ENCODE measurements at regions of chr19 and their contacts with region 1.

Region 1: DNA sequence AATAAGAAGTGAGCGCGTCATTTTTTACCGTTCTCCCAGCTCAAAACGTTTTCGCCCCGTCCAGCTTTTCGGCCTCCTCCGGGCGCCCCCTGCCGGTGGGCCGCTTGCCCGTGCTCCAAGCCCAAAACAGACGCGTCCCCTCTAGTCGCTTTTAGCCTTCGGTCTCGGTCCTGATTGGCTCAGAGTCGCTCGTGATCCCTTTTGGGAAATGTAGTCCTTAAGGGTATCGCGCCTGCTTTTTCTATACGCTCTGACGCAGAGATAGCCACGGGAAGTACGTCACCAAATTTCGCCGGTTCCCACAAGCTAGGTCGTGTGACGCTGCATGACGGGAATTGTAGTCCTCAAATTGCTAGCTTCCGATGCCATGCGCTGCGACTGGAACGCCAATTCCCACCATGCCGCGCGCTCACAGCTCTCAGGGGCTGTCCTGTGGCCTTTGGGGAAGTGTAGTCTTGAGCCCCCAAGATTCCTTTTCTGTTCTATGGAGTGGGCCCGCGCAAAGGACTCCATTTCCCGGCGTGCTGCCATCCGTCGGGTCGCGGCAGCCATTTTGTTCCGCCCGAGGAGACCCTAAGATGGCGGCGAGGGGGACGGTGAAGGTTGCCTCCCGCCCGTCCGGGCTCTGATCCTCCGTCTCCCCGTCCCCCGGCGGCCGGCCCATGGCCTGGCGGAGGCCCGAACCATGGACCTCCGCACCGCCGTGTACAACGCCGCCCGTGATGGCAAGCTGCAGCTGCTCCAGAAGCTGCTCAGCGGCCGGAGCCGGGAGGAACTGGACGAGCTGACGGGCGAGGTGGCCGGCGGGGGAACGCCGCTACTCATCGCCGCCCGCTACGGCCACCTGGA is at the start of gene FEM1A:
- DNase-seq: peak; percentile 93
- H3K4me3 ChIP-seq: peak within 1 kb of the TSS; percentile 77 to 87
- H3K27ac ChIP-seq: peak within 1 kb of the TSS; percentile 68 to 82
- H3K4me1 ChIP-seq: peaks cover 7 to 8% of the 10 kb centered on the region in 2 experiments; a peak in 2 of 4 replicates
- H3K27me3 ChIP-seq: no peaks in the 10 kb centered on the region
- CTCF ChIP-seq: peak; percentile 99
- EP300 ChIP-seq: no peak
- RAD21 ChIP-seq: peak; percentile 97
- polyA plus RNA-seq, gene FEM1A: 4.8 and 5.0 TPM in 2 replicates

Region 2: DNA sequence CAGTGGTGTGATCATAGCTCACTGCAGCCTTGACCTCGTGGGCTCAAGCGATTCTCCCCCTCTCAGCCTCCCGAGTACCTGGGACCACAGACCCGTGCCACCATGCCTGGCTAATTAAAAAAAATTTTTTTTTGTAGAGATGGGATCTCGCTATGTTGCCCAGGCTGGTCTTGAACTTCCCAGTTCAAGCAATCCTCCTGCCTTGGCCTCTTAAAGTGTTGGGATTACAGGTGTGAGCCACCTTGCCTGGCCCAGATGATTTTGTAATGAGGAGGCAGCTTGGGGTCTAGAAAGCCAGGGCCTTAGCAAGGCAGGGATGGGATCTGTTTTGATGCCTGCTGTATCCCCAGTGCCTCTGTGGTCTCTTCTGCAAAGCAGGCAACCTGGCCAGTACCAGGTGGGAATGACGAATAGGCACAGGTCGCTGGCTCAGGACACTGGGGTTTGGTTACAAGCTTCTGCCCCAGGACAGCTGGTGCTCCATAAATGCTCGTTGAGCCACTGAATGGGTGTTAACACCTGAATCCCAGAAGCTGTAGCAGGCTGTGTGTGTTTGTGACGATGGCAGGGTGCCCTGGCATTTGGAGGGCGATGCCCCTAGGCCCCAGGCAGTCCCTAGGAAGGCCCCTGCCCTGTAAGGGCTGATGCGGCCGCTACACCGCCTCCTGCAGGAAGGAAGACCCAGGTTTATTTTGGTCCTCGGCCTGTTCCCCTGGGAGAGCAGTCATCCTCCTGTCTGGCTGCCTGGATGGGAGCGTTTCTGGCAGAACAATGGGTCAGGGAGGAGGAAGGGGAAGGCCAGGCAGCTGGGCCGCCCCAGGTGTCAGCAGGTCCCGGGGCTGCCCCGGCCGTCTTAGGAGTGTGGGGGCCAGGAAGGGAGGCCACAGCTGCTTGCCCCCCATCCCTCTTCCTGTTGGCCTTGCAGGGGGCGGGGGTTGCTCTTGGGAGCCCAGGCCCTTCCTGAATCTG is 143.4 kb before region 1 on chr19:
- CTCF ChIA-PET with region 1: no interaction called
- POLR2A ChIA-PET with region 1: no interaction called
- DNase-seq: no peak
- H3K4me3 ChIP-seq: no peak overlapping the region; a peak in 1 of 4 replicates
- H3K27ac ChIP-seq: no peak overlapping the region
- H3K4me1 ChIP-seq: no peaks in the 10 kb centered on the region
- H3K27me3 ChIP-seq: no peaks in the 10 kb centered on the region
- CTCF ChIP-seq: no peak
- EP300 ChIP-seq: no peak
- RAD21 ChIP-seq: no peak

Region 3: DNA sequence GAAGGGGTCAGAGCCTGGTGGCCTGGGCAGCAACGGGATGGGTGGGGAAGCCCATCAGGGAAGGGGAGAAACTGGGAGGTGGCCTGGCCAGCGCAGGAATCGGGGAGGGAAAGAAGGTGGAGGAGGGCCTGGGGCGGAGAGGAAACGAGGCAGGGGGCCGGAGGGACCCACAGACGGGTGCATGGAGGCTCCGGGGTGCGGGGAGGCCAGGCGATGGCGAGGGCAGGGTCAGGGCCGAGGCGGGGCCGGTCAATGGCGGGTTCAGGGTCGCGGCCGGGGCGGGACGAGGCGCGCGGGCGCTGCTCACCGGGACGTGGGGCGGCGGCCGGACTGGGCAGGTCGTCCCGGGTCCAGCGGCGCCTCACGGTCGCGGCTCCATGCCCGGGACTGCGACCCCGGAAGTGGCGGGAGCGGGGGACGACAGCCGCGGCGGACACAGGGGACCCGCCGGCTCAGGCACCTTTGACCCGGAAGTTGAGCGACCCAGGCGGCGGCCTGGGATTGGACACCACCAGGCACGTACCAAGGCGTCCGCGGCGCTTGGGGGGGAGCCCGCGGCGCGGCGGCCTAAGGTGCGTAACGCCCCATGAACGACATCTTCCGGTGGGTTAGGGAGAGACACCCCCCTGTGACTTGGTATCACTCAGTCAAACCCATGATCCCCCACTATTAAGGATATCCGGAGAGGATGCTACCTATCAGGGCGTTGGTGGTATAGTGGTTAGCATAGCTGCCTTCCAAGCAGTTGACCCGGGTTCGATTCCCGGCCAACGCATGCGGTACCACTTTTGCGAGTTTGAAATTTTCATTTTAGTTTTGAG is 67.8 kb before region 1 on chr19 and contains the start of gene DPP9:
- CTCF ChIA-PET with region 1: interaction called, 350 read pairs
- POLR2A ChIA-PET with region 1: interaction called, 10 read pairs
- DNase-seq: peak; percentile 100
- H3K4me3 ChIP-seq: peak within 1 kb of the TSS; percentile 73 to 99
- H3K27ac ChIP-seq: peak within 1 kb of the TSS; percentile 44 to 68
- H3K4me1 ChIP-seq: peaks cover 8 to 12% of the 10 kb centered on the region in 2 experiments; a peak in 3 of 4 replicates
- H3K27me3 ChIP-seq: no peaks in the 10 kb centered on the region
- CTCF ChIP-seq: no peak
- EP300 ChIP-seq: peak; percentile 58 to 62; a peak in 2 of 4 replicates
- RAD21 ChIP-seq: no peak
- polyA plus RNA-seq, gene DPP9: 10.5 and 17.1 TPM in 2 replicates

Region 4: GRCh38 chr19:4748589-4748988 is 42.8 kb before region 1 on chr19:
- CTCF ChIA-PET with region 1: interaction called, 11 read pairs
- POLR2A ChIA-PET with region 1: no interaction called
- DNase-seq: no peak
- H3K4me3 ChIP-seq: no peak overlapping the region
- H3K27ac ChIP-seq: no peak overlapping the region
- H3K4me1 ChIP-seq: peaks cover 5 to 8% of the 10 kb centered on the region in 2 experiments; a peak in 2 of 4 replicates
- H3K27me3 ChIP-seq: no peaks in the 10 kb centered on the region
- CTCF ChIP-seq: no peak
- EP300 ChIP-seq: no peak
- RAD21 ChIP-seq: no peak

Region 5: DNA sequence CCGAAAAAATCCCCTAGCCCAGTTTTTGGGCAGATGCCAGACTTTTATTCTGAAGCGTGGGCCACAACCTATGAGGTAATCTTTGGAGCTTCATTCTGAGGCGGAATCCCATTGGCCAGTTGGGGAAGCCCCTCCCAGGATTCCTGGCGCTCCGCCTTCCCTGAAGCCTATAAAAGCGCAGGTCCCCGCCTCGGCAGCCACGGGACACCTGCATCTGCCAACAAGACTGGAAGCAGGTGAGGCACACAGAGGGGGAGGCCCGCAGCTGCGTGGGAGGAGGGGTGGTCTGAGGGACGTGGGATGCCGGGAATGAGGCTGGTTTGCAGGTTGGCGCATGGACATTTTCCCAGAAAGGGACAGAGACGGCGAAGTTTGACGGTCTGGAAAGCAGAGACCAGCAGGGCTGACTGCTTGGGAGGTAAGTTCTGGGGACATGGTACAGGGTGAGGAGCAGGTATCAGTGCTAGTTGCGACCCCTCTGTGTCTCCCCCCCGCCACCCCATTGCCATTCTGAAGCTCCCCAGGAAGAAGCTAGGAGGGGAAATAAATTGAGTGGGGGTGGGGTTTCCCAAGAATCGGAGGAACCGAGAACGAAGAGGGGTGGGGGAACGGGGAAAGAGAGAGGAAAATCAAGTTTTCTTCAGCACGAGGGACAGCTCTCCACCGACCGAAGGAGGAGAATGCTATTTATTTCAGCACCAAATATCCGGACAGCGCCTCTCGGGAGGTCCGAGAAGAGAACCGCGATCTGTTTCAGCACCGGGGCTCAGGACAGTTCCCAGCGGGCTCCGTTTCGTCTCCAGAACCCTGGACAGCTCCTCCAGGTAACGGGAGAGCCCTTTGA is 22.2 kb before region 1 on chr19:
- CTCF ChIA-PET with region 1: interaction called, 21 read pairs
- POLR2A ChIA-PET with region 1: interaction called, 22 read pairs
- DNase-seq: peak; percentile 90
- H3K4me3 ChIP-seq: peak overlapping the region in 1 of 2 experiments; percentile 41; a peak in 2 of 4 replicates
- H3K27ac ChIP-seq: peak overlapping the region in 1 of 2 experiments; percentile 36; a peak in 1 of 4 replicates
- H3K4me1 ChIP-seq: peaks cover 0 to 18% of the 10 kb centered on the region in 2 experiments; a peak in 1 of 4 replicates
- H3K27me3 ChIP-seq: no peaks in the 10 kb centered on the region
- CTCF ChIP-seq: no peak
- EP300 ChIP-seq: no peak
- RAD21 ChIP-seq: no peak

Region 6: GRCh38 chr19:4776436-4777205 is 14.8 kb before region 1 on chr19:
- CTCF ChIA-PET with region 1: interaction called, 20 read pairs
- POLR2A ChIA-PET with region 1: interaction called, 3 read pairs
- DNase-seq: peak; percentile 81
- H3K4me3 ChIP-seq: no peak overlapping the region
- H3K27ac ChIP-seq: no peak overlapping the region
- H3K4me1 ChIP-seq: peaks cover 0 to 18% of the 10 kb centered on the region in 2 experiments; a peak in 1 of 4 replicates
- H3K27me3 ChIP-seq: no peaks in the 10 kb centered on the region
- CTCF ChIP-seq: no peak
- EP300 ChIP-seq: no peak
- RAD21 ChIP-seq: 0 out of 2 replicates have a peak, but pooled peaks have one; percentile 4

Region 7: DNA sequence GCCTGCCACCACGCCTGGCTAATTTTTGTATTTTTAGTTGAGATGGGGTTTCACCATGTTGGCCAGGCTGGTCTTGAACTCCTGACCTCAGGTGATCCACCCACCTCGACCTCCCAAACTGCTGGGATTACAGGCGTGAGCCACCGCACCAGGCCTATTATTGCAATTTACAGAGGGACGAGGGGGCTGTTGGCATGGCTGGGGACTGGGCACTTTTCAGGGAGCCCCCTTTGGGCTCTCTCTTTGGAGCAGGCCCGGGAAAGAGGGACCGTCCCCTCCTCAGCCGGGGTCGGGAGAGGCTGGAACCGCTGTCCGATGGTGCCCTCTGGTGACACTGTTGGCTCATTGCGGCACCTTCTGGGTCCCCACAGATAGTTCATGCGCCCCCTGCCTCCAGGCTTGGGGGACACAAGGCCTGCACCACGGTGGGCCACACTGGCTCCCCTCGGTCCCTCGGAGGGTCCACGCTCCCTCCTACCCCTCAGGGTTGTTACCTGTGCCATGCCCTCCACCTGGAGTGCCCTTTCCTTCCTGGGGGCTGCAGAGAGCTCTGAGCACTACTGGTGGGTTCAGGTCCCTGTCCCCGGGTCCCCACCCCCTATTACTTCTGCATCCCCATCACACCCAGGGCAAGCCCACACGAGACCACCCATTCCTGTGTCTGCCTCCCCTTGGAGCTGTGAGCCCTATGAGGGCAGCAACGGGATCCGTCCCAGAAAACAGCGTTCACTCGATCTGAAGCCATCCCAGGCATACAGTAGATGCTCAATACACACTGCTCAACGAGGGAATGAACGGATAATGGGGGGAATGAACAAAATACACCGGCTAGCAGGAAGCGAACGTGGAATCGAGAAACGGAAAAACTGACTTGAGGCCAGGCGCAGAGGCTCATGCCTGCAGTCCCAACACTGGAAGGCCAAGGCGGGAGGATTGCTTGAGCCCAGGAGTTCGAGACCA is 12.6 kb after region 1 on chr19:
- CTCF ChIA-PET with region 1: interaction called, 20 read pairs
- POLR2A ChIA-PET with region 1: interaction called, 3 read pairs
- DNase-seq: peak; percentile 90
- H3K4me3 ChIP-seq: peak overlapping the region in 1 of 2 experiments; percentile 23; a peak in 1 of 4 replicates
- H3K27ac ChIP-seq: no peak overlapping the region
- H3K4me1 ChIP-seq: no peaks in the 10 kb centered on the region
- H3K27me3 ChIP-seq: no peaks in the 10 kb centered on the region
- CTCF ChIP-seq: peak; percentile 77
- EP300 ChIP-seq: no peak
- RAD21 ChIP-seq: peak; percentile 82